A549 (cell line): ENCODE measurements at regions of chr9 and their contacts with region 1.

Region 1: GRCh38 chr9:92140074-92140753 is 25.0 kb upstream of the SPTLC1 start:
- DNase-seq: peak; percentile 72 to 73
- ATAC-seq: peak; percentile 41 to 81; a peak in 5 of 6 replicates
- H3K4me3 ChIP-seq: no peak overlapping the region
- H3K27ac ChIP-seq: peak overlapping the region; percentile 12 to 73; a peak in 3 of 6 replicates
- H3K4me1 ChIP-seq: peaks cover 5% of the 10 kb centered on the region; the same call in 2 of the 3 replicates
- CTCF ChIP-seq: peak; percentile 88
- EP300 ChIP-seq: no peak
- POLR2A ChIP-seq: no peak
- RAD21 ChIP-seq: peak; percentile 83 to 89

Region 2: DNA sequence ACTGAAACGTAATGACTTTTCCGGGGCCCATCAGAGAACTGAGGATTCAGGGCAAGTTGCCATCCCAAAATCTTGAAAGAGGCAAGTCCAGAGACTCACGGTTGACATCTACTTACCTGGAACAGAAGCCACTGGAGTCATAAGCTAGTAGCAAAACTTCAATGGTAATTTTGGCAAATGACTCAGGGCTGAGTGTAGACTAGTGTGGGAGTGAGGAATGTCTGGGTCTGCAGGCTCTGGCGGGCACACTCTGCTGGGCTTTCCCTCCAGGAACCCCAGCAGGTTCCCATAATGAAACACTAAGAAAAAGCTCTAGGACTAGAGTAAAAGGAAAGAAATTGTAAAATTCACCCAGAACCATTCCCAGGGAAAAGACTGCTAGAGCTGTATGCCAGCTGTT is 593.6 kb before region 1 on chr9:
- CTCF ChIA-PET with region 1: no interaction called
- POLR2A ChIA-PET with region 1: no interaction called
- DNase-seq: no peak
- ATAC-seq: no peak
- H3K4me3 ChIP-seq: no peak overlapping the region
- H3K27ac ChIP-seq: no peak overlapping the region
- H3K4me1 ChIP-seq: no peaks in the 10 kb centered on the region
- CTCF ChIP-seq: no peak
- EP300 ChIP-seq: no peak
- POLR2A ChIP-seq: no peak
- RAD21 ChIP-seq: no peak

Region 3: GRCh38 chr9:91847581-91848091 is 292.6 kb before region 1 on chr9:
- CTCF ChIA-PET with region 1: no interaction called
- POLR2A ChIA-PET with region 1: no interaction called
- DNase-seq: no peak
- ATAC-seq: no peak
- H3K4me3 ChIP-seq: no peak overlapping the region
- H3K27ac ChIP-seq: no peak overlapping the region
- H3K4me1 ChIP-seq: no peaks in the 10 kb centered on the region
- CTCF ChIP-seq: no peak
- EP300 ChIP-seq: no peak
- POLR2A ChIP-seq: no peak
- RAD21 ChIP-seq: no peak

Region 4: DNA sequence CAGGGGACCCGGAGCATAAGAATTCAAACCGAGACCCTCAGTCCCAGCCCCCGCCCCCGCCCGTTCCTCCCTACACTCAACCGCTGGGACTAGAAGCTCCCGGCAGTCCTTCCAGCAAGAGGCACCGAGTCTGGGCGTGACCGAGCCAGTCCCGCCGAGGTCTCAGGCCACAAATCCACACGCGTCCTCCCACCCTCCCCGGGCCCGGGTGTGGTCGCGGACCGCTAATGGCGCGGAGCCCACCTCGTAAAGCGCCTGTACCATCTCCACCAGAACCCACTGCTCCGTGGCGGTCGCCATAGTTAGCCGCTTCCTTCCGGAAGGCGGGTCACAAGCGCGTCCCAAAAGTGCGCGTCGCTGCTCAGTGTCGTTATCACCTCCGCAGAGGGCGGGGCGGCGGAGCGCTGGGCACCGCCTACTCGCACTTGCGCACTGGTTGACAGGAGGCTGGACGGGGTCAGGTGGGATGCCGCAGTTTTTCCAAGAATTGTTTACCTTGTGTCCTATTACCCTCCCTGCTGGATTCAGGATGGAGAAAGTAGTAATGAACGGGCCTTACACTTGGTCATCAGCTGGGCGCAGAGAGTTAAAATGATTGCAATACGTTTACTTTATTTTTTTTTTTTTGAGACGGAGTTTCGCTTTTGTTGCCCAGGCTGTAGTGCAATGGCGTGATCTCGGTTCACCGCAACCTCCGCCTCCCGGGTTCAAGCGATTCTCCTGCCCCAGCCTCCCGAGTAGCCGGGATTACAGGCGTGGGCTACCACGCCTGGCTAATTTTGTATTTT is 24.9 kb before region 1 on chr9 and contains the start of gene SPTLC1:
- CTCF ChIA-PET with region 1: interaction called, 13 read pairs
- POLR2A ChIA-PET with region 1: no interaction called
- DNase-seq: peak; percentile 94 to 95
- ATAC-seq: peak; percentile 97 to 98
- H3K4me3 ChIP-seq: peak within 1 kb of the TSS; percentile 83
- H3K27ac ChIP-seq: peak within 1 kb of the TSS; percentile 83 to 85
- H3K4me1 ChIP-seq: peaks cover 13% of the 10 kb centered on the region
- CTCF ChIP-seq: no peak
- EP300 ChIP-seq: no peak
- POLR2A ChIP-seq: peak; percentile 87
- RAD21 ChIP-seq: no peak
- polyA plus RNA-seq, gene SPTLC1: 112 and 122 TPM in 2 replicates

Region 5: DNA sequence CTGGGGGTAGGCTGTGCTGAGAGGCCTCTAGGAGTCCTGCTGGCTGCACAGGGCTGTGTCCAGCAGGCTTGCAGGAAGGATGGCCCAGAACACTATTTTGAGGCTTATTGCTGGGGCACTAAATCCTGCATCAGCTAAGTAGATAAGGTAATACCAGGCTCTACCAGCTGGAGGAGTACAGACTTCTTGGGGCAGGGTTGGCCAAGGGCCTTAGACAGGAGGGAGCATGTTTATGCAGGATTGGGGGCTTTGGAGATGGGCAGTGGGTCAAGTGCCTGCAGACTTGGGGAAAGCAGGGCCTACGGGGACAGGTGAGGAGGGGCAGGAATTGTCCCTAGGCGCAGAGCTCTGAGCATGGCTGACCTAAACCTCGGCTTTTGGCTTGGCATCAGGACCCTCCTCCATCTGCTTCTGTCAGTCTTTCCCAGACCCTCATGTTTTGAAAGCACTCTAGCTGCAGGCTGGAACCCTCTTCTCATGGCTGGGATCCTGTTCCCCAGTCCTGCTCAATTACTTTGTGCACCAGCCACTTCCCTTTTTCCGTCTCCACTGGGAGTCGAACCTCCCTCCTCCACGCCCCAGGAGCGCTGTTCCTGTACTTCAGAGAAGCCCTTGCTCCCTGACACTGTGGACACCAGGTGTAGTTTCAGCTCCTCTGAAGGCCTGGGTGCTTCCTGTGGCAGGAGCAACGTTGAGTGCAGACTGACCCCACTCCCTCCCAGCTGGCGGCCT is 36.0 kb after region 1 on chr9:
- CTCF ChIA-PET with region 1: interaction called, 25 read pairs
- POLR2A ChIA-PET with region 1: no interaction called
- DNase-seq: peak in 1 of 2 experiments; percentile 17
- ATAC-seq: peak; percentile 65 to 77; a peak in 4 of 6 replicates
- H3K4me3 ChIP-seq: no peak overlapping the region
- H3K27ac ChIP-seq: no peak overlapping the region
- H3K4me1 ChIP-seq: no peaks in the 10 kb centered on the region
- CTCF ChIP-seq: no peak
- EP300 ChIP-seq: no peak
- POLR2A ChIP-seq: no peak
- RAD21 ChIP-seq: no peak

Region 6: DNA sequence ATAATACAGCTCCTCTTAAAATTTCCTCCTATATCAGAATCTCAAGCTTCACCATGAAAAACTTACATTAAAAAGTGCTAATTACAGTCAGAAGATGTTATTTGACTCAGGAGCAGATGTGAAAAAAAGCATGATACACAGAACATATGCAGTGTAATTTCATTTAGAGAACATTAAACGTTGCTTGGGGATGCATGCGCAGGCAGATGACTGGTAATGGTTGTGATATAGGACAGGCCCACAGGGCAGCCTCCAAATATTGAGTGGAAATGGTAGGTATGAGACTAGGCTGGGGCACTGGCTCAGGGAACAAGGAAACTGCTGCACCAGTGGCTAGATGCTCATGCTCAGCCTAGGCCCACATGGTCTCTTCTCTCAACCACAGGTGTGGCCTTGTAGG is 83.5 kb after region 1 on chr9:
- CTCF ChIA-PET with region 1: interaction called, 37 read pairs
- POLR2A ChIA-PET with region 1: no interaction called
- DNase-seq: no peak
- ATAC-seq: peak; percentile 19 to 49; a peak in 1 of 6 replicates
- H3K4me3 ChIP-seq: no peak overlapping the region
- H3K27ac ChIP-seq: no peak overlapping the region
- H3K4me1 ChIP-seq: no peaks in the 10 kb centered on the region
- CTCF ChIP-seq: no peak
- EP300 ChIP-seq: no peak
- POLR2A ChIP-seq: no peak
- RAD21 ChIP-seq: no peak

Region 7: GRCh38 chr9:92265159-92265558 is 124.9 kb after region 1 on chr9:
- CTCF ChIA-PET with region 1: interaction called, 33 read pairs
- POLR2A ChIA-PET with region 1: no interaction called
- DNase-seq: no peak
- ATAC-seq: peak in 1 of 2 experiments; percentile 62; a peak in 1 of 6 replicates
- H3K4me3 ChIP-seq: no peak overlapping the region
- H3K27ac ChIP-seq: no peak overlapping the region
- H3K4me1 ChIP-seq: no peaks in the 10 kb centered on the region
- CTCF ChIP-seq: no peak
- EP300 ChIP-seq: no peak
- POLR2A ChIP-seq: no peak
- RAD21 ChIP-seq: no peak

Region 8: DNA sequence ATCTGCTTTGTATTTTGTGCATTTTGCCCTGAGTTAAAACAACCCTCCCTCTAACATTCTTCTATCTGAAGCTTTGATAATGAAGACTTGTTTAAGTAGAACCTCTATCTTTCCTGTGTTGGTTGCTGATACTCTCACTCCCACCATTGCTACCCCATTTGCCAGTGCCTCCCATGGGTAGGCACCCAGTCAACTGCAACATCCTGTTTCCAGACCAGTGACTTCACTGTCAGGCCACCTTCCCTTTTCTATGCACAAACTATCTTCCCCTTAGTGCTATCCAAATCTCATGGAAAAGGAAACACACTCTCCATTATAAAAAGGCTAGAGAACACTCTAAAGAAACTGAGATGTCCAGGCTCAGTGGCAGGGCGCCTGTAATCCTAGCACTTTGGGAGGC is 158.9 kb after region 1 on chr9:
- CTCF ChIA-PET with region 1: interaction called, 24 read pairs
- POLR2A ChIA-PET with region 1: no interaction called
- DNase-seq: no peak
- ATAC-seq: no peak
- H3K4me3 ChIP-seq: no peak overlapping the region
- H3K27ac ChIP-seq: no peak overlapping the region
- H3K4me1 ChIP-seq: peaks cover 8% of the 10 kb centered on the region; the same call in 2 of the 3 replicates
- CTCF ChIP-seq: no peak
- EP300 ChIP-seq: no peak
- POLR2A ChIP-seq: no peak
- RAD21 ChIP-seq: no peak

Region 9: GRCh38 chr9:92438900-92439526 is 298.8 kb after region 1 on chr9:
- CTCF ChIA-PET with region 1: interaction called, 27 read pairs
- POLR2A ChIA-PET with region 1: no interaction called
- DNase-seq: peak in 1 of 2 experiments; percentile 6
- ATAC-seq: no peak
- H3K4me3 ChIP-seq: no peak overlapping the region
- H3K27ac ChIP-seq: no peak overlapping the region
- H3K4me1 ChIP-seq: no peaks in the 10 kb centered on the region
- CTCF ChIP-seq: peak; percentile 43; the same call in 1 of the 3 replicates
- EP300 ChIP-seq: no peak
- POLR2A ChIP-seq: no peak
- RAD21 ChIP-seq: peak; percentile 28 to 48; a peak in 2 of 5 replicates